Heart left ventricle (tissue), 16 donors: ENCODE measurements at regions of chr17 and their contacts with region 1.

Region 1: DNA sequence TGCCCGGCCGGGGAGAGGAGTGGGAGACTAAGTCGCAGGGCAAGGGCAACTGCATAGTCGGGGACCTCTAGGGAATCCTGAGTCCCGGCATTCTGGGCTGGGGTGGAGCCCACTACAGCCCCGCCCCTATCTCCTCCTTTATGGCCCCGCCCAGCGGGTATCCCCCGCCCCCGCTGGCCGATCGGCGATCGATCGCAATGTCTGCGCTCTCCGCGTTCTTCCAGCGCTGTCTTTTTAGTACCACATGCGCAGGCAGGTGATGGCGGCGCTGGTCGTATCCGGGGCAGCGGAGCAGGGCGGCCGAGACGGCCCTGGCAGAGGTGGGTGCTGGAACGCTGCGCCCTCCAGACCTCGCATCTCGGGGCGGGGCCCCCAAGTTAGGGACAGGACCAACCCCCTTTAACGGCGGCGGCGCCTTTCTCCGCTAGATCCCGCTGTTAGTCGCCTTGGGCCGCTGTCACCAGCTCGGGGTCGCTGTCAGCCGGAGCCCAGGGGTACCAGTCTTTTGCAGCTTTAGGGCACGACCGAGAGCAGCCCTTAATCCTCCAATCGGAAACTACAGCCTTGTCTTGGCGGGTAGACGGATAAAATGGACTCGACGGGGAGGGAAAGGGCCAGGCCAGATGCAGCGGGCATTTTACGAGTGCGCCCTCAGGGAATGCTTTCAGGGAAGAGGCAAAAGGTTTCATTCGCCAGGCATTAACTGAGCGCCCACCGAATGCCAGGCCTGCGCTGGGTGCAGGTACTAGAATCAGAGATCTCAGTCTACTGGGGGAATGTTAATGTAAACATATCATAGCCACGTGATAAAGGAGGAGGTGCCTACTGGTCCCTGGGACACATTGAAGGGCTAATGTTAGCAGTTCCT is at the start of gene DPH1:
- DNase-seq: peak; percentile 90 to 94 (median 92)
- ATAC-seq: peak; percentile 83 to 93 (median 88)
- H3K4me3 ChIP-seq: peak within 1 kb of the TSS; percentile 64 to 100 (median 91)
- H3K27ac ChIP-seq: peak within 1 kb of the TSS in 10 of 12 donors; percentile 44 to 87 (median 72)
- H3K4me1 ChIP-seq: peaks cover 10 to 48% (median 29%) of the 10 kb centered on the region in 12 donors
- H3K27me3 ChIP-seq: peaks cover 0 to 29% (median 0%) of the 10 kb centered on the region in 9 donors
- CTCF ChIP-seq: no peak
- POLR2A ChIP-seq: peak in 1 of 2 donors; percentile 65
- total RNA-seq, gene DPH1: 14.0 to 38.1 (median 27.6) TPM

Region 2: DNA sequence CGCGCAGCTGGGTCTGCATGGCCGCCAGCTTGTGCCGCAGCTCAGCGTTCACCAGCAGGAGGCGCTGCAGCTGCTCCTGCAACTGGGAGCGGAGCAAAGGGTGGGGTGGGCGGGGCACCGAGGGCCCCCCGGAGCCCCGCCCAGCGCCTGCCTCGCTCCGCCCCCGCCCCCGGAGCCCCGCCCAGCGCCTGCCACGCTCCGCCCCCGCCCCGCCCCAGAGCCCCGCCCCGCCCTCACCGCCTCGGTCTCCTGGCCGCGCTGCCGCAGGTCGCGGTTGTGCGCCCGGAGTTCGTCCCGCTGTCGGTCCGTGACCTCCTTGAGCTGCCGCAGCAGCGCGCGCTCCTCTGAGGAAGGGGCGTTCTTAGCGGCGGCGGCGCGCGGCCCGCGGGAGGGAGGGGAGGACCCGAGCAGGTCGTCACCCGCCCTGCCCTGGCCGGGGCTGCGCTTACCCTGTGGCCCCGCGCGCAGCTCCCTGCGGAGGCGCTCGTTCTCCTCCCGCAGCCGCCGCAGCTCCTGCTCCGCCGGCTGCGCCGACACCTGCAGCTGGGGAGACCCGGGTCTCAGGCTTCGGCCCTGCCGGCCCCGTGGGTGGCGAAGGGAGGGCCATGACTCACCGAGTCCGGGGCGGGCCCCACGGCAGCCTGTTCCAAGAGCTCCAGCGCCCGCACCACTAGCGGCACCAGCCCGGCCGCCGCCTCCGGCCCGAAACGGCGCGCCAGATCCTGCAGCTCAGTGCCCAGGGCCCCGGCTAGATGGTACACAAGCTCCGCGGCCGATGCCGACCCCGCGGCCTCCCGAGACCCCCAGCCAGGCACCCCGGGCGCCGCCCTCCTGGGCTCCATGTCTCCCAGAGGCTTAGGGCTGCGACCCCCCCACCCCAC is 380.9 kb before region 1 on chr17:
- intact Hi-C with region 1: loop called in 2 of 10 experiments (anchors 5 to 10 kb)
- DNase-seq: peak; percentile 91 to 98 (median 95)
- ATAC-seq: peak; percentile 25 to 67 (median 50)
- H3K4me3 ChIP-seq: peak overlapping the region; percentile 68 to 99 (median 83)
- H3K27ac ChIP-seq: peak overlapping the region; percentile 93 to 100 (median 99)
- H3K4me1 ChIP-seq: peaks cover 7 to 59% (median 48%) of the 10 kb centered on the region in 12 donors
- H3K27me3 ChIP-seq: no peaks in the 10 kb centered on the region
- CTCF ChIP-seq: peak in 11 of 12 donors; percentile 73 to 97 (median 87)
- POLR2A ChIP-seq: peak; percentile 61 to 89

Region 3: DNA sequence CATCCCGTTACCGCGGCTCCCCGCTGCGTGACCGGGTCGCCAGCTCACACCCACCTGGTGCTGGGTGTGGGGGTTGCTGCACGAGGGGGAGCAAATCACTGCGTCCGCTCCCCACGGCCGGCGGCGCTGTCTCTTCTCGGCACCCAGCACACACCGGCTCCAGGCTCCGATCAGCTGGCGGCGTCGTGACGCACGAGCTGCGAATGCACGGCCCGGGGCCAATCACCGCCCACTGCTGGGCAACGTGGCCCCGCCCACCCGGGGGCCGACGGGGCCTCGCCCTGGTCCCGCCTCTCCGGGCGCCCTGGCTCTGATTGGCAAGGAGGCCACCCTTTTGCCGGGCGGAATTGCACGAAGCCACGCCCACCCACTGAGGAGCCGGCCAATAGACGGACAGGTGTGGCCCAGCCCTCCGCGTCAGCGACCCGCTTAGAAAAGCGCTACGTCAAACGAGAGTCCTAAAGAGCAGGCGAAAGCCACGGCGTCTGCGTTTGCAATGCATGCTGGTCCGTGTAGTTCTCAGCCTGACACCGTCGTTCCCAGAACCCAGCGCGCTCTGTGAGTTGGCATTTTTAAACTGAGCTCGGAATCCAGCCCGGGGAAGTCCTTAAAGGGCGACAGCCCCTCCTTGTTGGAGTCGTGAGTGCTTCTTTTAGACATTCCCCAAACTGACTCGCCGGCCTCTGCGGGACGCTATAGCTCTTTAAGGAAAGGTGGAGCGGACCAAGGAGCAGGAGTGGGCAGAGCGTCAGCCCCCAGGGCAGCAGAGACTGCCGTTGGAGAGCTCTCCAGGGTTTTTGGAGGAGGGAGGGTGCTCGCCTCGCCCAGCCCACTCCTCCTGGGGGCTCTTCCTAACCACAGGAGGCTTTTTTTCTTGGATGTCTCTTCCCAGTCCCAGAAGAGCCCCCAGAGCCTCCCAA is 313.8 kb before region 1 on chr17:
- intact Hi-C with region 1: loop called in 2 of 10 experiments (anchors 5 to 10 kb)
- DNase-seq: peak; percentile 100
- ATAC-seq: peak; percentile 71 to 81 (median 78)
- H3K4me3 ChIP-seq: peak overlapping the region; percentile 82 to 100 (median 94)
- H3K27ac ChIP-seq: peak overlapping the region; percentile 96 to 100 (median 100)
- H3K4me1 ChIP-seq: peaks cover 9 to 62% (median 49%) of the 10 kb centered on the region in 12 donors
- H3K27me3 ChIP-seq: no peaks in the 10 kb centered on the region
- CTCF ChIP-seq: peak in 2 of 12 donors; percentile 5 to 28
- POLR2A ChIP-seq: peak; percentile 99 to 100

Region 4: DNA sequence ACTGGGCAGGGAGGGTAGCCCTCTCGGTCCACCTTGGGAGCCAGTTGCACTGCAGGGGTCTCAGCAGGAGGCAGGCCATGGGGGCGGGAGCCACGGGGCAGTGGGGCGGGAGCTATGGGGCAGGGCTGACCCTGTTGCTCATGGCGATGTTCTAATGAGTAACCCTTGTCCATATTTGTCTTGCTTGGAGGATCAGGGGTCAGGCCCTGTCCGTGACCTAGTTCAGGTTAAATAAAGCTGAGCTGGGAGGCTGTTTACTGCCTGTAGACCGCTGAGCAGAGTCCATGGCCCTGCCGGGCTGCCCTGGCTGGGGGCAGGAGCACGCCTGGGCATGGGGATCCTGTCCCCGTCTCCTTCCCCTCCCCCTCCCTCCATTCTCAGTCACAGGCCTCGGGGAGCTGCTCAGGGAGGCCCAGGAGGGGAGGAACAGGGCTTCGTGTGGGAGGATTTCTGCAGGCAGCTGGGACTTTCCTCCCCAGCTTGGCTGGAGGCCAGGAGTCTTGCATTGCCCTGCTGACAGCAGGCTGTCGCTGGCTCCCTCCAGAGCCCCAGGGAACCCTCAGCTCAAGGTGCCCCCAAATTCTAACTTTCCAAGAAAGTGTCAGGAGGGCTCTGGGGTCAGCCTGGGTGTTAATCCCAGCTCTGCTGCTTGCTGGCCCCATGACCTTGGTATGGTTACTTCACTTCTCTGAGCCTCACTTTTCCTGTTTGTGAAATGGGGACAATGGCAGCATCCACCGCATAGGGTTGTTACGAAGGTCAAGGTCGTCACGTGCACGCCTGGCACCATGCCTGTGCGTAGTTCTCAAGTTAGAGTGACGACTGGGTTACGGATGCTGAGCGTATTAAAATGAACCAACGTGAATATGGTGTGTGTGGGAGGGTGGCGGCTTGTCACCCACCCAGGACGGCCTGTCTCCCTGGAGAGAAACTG is 293.5 kb before region 1 on chr17:
- intact Hi-C with region 1: loop called in 1 of 10 experiments (anchors 10 kb)
- DNase-seq: peak; percentile 70 to 88 (median 84)
- ATAC-seq: peak; percentile 34 to 80 (median 68)
- H3K4me3 ChIP-seq: no peak overlapping the region
- H3K27ac ChIP-seq: peak overlapping the region in 6 of 12 donors; percentile 10 to 64 (median 27)
- H3K4me1 ChIP-seq: peaks cover 0 to 30% (median 16%) of the 10 kb centered on the region in 12 donors
- H3K27me3 ChIP-seq: no peaks in the 10 kb centered on the region
- CTCF ChIP-seq: no peak
- POLR2A ChIP-seq: no peak

Region 5: DNA sequence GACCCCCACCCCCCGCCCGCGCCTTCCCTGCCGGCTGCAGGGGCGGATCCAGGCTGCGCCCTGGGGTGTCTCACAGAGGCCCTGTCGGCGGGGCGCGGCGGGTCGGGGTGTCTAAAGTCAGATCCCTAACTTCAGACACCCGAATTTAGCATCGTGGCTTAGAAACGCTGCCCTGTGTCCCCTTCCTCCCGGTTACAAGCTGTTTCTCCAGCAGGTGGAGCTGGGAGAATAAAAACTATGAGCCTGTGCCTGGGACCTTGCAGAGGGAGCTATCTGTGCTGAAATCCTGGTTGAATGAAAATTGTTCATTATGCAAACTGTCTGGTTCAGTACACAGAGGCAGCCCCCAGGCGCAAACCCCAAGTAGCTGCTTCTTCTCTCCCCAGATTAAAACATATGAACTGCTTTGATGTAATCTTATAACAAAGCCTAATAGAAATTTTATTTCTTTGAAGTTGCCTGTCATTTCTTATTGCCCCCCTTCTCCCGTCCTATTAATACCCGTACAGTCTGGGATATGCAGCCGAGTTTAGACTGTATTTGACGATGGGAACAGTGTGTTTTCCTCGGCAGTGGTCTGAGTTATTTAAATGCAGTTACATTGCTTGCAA is 121.3 kb before region 1 on chr17:
- intact Hi-C with region 1: loop called (anchors 1 to 5 kb)
- DNase-seq: peak in 4 of 5 donors; percentile 52 to 65 (median 59)
- ATAC-seq: peak; percentile 63 to 86 (median 84)
- H3K4me3 ChIP-seq: peak overlapping the region in 8 of 12 donors; percentile 20 to 46 (median 30)
- H3K27ac ChIP-seq: no peak overlapping the region
- H3K4me1 ChIP-seq: peaks cover 0 to 28% (median 10%) of the 10 kb centered on the region in 12 donors
- H3K27me3 ChIP-seq: peaks cover 0 to 52% (median 15%) of the 10 kb centered on the region in 9 donors
- CTCF ChIP-seq: peak; percentile 47 to 86 (median 75)
- POLR2A ChIP-seq: no peak